CD4-positive, alpha-beta T cell (primary cell): ENCODE measurements at regions of chr20 and their contacts with region 1.

Region 1: DNA sequence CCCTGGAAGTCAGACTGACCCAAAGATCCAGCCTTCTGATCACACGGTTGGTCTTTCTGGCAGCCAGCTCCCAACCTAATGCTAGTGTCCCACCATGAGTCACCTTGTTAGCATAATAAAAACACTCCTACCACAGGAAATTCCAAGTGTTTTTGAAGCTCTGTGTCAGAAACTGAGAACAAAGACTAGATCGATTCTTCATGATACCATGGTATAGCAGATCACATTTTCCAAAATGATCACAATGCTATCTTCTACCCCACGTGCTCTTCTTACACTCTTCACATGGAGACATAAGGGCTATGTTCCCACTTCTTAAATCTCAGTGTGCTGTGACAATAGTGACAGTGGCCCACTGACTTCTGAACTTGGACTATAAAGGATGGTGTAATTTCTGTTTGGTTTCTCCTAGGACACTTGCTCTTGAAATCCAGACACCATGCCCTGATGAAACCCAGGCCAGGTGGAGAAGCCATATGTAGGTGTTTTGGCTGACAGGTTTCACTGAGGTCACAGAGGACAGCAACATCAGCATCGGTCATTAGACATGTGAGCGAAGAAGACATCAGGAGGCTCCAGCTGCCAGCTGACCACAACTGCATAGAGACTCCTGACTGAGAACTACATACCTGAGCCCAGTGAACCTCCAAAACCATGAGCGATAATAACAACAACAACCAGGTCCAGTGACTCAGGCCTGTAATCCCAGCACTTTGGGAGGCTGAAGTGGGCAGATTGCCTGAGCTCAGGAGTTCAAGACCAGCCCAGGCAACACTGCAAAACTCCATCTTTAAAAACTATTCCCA is 57.5 kb downstream of the MKKS start:
- DNase-seq: no peak
- ATAC-seq: no peak
- H3K4me3 ChIP-seq: no peak overlapping the region
- H3K4me3 Mint-ChIP-seq: no peak overlapping the region
- H3K27ac ChIP-seq: no peak overlapping the region
- H3K27ac Mint-ChIP-seq: no peak overlapping the region
- H3K4me1 ChIP-seq: no peaks in the 10 kb centered on the region
- H3K4me1 Mint-ChIP-seq: no peaks in the 10 kb centered on the region
- H3K27me3 ChIP-seq: peaks cover 0 to 3% of the 10 kb centered on the region in 2 experiments
- H3K27me3 Mint-ChIP-seq: peaks cover 24% of the 10 kb centered on the region
- CTCF ChIP-seq: no peak

Region 2: DNA sequence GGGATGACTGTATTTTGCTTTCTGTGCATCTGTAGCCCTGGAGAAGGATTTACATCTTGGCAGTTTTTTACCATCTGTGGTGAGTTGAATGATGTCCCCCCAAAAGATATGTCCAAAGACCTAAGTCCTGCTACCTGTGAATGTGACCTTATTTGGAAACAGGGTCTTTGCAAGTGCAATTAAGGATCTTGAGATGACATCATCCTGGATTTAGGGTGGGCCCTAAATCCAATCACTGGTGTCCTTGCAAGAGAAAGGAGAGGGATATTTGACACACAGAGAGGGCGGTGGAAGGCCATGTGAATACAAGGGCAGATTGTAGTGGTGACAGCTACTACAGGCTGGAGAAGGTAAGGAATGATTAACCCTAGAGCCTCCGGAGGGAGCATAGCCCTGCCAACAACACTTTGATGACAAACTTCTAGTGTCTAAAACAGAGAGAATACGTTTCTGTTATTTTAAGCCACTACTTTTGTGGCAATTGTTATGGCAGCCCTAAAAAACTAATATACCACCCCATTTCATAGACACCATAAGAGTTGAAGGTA is 22.4 kb after region 1 on chr20:
- CTCF ChIA-PET with region 1: no interaction called
- POLR2A ChIA-PET with region 1: no interaction called
- intact Hi-C with region 1: no loop called
- DNase-seq: no peak
- ATAC-seq: no peak
- H3K4me3 ChIP-seq: no peak overlapping the region
- H3K4me3 Mint-ChIP-seq: no peak overlapping the region
- H3K27ac ChIP-seq: no peak overlapping the region
- H3K27ac Mint-ChIP-seq: no peak overlapping the region
- H3K4me1 ChIP-seq: no peaks in the 10 kb centered on the region
- H3K4me1 Mint-ChIP-seq: no peaks in the 10 kb centered on the region
- H3K27me3 ChIP-seq: no peaks in the 10 kb centered on the region
- H3K27me3 Mint-ChIP-seq: no peaks in the 10 kb centered on the region
- CTCF ChIP-seq: no peak

Region 3: DNA sequence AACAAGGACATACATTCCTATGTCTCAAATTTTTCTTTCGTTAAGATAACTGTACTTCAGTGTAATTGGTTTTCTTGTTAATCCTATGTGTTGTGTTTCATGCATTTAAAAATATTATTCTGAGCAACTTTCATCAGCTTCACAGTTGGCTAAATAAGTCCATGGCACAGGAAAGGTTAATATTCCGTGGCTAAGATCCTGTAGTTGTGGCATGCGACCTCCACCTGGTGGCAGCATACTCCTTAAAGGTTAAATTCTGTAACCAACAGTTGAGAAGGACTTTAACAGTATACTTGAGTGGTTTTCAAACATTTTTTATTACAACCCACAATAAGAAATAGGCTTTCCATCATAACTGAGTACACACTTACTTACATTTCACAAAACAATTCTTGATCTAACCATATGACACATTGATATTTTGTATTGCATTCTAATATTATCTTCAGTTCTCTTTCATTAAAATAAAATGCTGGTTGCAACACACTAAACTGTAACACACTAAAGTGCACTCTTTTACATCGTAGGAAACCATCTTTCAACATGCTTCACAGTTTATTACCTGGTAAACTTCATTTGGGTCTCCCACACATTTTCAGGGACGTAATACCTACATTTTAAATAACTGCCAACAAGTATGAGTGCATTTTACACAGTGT is 177.0 kb after region 1 on chr20:
- CTCF ChIA-PET with region 1: no interaction called
- POLR2A ChIA-PET with region 1: no interaction called
- intact Hi-C with region 1: loop called in 1 of 2 experiments (anchors 5 kb)
- DNase-seq: peak in 7 of 14 experiments; percentile 7 to 43 (median 27)
- ATAC-seq: no peak
- H3K4me3 ChIP-seq: no peak overlapping the region
- H3K4me3 Mint-ChIP-seq: no peak overlapping the region
- H3K27ac ChIP-seq: no peak overlapping the region
- H3K27ac Mint-ChIP-seq: no peak overlapping the region
- H3K4me1 ChIP-seq: peaks cover 10% of the 10 kb centered on the region
- H3K4me1 Mint-ChIP-seq: peaks cover 39% of the 10 kb centered on the region
- H3K27me3 ChIP-seq: no peaks in the 10 kb centered on the region
- H3K27me3 Mint-ChIP-seq: no peaks in the 10 kb centered on the region
- CTCF ChIP-seq: peak; percentile 46